ENCODE measurements at regions of chr9 and their contacts with region 1.

Region 1: GRCh38 chr9:115944166-115944948 is 209.2 kb upstream of the PAPPA start:
- DNase-seq: peak; percentile 81 to 90
- H3K4me3 ChIP-seq: peak overlapping the region; percentile 13 to 16
- H3K27ac ChIP-seq: peak overlapping the region; percentile 53 to 70
- H3K4me1 ChIP-seq: peaks cover 0 to 42% (median 20%) of the 10 kb centered on the region in 4 donors
- H3K27me3 ChIP-seq: no peaks in the 10 kb centered on the region
- CTCF ChIP-seq: no peak

Region 2: GRCh38 chr9:115615821-115616665 is 328.3 kb before region 1 on chr9:
- intact Hi-C with region 1: loop called (anchors 10 kb)
- DNase-seq: no peak
- H3K4me3 ChIP-seq: no peak overlapping the region
- H3K27ac ChIP-seq: no peak overlapping the region
- H3K4me1 ChIP-seq: no peaks in the 10 kb centered on the region
- H3K27me3 ChIP-seq: no peaks in the 10 kb centered on the region
- CTCF ChIP-seq: no peak